WTC11 (cell line): ENCODE measurements at regions of chr19 and their contacts with region 1.

Region 1: GRCh38 chr19:38394488-38394887 is 6.0 kb downstream of the SPRED3 start:
- DNase-seq: peak; percentile 99
- ATAC-seq: peak; percentile 94
- H3K4me3 Mint-ChIP-seq: peak overlapping the region; percentile 66
- H3K27ac Mint-ChIP-seq: peak overlapping the region; percentile 72; the same call in 1 of the 2 replicates
- H3K4me1 Mint-ChIP-seq: peaks cover 30% of the 10 kb centered on the region
- H3K27me3 Mint-ChIP-seq: peaks cover 45% of the 10 kb centered on the region
- CTCF ChIP-seq: no peak

Region 2: DNA sequence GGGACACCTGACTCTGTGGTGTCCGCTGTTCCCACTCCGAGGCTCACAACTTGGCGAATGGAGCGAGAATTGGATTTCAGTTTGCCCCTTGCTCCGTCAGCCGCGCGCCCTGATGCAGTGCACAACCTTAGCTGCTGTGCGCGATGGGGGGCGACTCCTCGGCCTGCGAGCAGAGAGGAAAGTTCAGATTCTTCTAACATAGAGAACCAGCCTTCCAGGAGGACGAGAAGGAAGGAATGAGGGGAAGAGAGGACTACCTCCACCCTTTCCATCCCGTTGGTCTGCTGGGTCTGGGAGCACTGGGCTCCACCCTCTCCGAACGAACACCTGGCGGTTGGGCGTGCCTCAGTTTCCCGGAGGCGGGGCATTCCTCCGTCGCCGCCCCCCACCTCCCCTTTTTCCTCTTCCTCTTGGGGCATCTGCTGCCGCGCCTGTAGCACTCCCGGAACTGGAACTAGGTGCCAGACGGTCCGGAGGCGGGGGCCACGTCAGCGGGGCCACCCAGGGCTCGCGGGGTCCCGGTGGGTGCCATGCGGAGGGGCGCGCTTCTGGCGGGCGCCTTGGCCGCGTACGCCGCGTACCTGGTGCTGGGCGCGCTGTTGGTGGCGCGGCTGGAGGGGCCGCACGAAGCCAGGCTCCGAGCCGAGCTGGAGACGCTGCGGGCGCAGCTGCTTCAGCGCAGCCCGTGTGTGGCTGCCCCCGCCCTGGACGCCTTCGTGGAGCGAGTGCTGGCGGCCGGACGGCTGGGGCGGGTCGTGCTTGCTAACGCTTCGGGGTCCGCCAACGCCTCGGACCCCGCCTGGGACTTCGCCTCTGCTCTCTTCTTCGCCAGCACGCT is 74.8 kb before region 1 on chr19 and contains the start of gene KCNK6:
- CTCF ChIA-PET with region 1: no interaction called
- POLR2A ChIA-PET with region 1: interaction called, 12 read pairs
- DNase-seq: peak; percentile 66
- ATAC-seq: peak; percentile 5
- H3K4me3 Mint-ChIP-seq: peak within 1 kb of the TSS; percentile 81
- H3K27ac Mint-ChIP-seq: no peak within 1 kb of the TSS
- H3K4me1 Mint-ChIP-seq: peaks cover 26% of the 10 kb centered on the region
- H3K27me3 Mint-ChIP-seq: peaks cover 54% of the 10 kb centered on the region
- CTCF ChIP-seq: no peak
- total RNA-seq, gene KCNK6: 12.9 to 18.3 TPM (median 13.2 TPM) in 3 replicates